CD4-positive, alpha-beta T cell (primary cell): ENCODE measurements at regions of chr5 and their contacts with region 1.

Region 1: DNA sequence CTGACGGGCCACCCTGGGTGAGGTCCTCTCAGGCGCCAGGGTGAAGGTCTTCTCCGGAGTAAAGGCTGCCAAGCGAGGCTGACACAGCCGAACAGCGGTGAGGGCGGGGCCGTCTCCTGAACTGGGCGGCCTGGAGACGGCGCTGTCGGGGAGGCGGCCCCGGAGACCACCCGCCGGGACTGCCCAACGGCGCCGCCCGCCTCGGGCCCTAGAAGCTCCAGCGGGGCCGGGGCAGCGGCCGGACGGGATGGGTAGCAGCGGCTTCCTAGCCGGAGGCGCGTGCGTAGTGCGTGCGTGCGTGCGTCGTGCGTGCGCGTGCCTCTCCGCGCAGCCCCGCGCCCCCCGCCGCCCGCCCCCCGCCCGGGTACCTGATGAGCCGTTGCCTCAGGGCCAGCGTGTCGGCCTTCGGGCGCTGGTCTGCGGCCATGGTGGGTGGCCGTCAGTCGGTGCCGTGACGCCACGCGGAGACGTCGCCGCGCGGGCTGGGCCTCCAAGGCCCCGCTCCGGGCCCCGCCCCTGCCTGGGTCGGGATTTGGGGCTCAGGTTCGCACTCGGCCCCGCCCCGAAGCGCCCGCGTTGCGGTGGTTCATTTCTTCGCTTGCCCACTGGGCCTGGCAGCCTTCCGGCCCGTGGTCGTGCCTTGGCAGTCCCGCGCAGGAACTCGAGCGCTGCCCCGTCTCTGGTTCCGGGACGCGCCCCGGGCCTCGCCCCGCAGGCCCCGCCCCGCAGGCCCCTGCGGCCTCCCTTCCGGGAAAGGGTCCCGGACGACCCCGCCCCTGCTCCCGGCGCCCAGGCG is at the start of gene PHYKPL:
- DNase-seq: peak; percentile 44 to 83 (median 64)
- ATAC-seq: peak; percentile 60
- H3K4me3 ChIP-seq: peak within 1 kb of the TSS; percentile 94
- H3K4me3 Mint-ChIP-seq: peak within 1 kb of the TSS; percentile 90
- H3K27ac ChIP-seq: peak within 1 kb of the TSS; percentile 81 to 85
- H3K27ac Mint-ChIP-seq: peak within 1 kb of the TSS; percentile 84
- H3K4me1 ChIP-seq: peaks cover 85% of the 10 kb centered on the region
- H3K4me1 Mint-ChIP-seq: peaks cover 54% of the 10 kb centered on the region
- H3K27me3 ChIP-seq: no peaks in the 10 kb centered on the region
- H3K27me3 Mint-ChIP-seq: no peaks in the 10 kb centered on the region
- CTCF ChIP-seq: no peak
- total RNA-seq, gene PHYKPL: 90.9 to 92.8 TPM

Region 2: GRCh38 chr5:178204182-178204894 is 28.0 kb before region 1 on chr5 and contains the start of gene HNRNPAB:
- CTCF ChIA-PET with region 1: interaction called, 7 read pairs
- POLR2A ChIA-PET with region 1: interaction called, 19 read pairs
- intact Hi-C with region 1: loop called in 1 of 2 experiments (anchors 1 kb)
- DNase-seq: peak; percentile 93 to 99 (median 97)
- ATAC-seq: peak; percentile 81
- H3K4me3 ChIP-seq: peak within 1 kb of the TSS; percentile 97
- H3K4me3 Mint-ChIP-seq: peak within 1 kb of the TSS; percentile 100
- H3K27ac ChIP-seq: peak within 1 kb of the TSS; percentile 29 to 62
- H3K27ac Mint-ChIP-seq: peak within 1 kb of the TSS; percentile 93
- H3K4me1 ChIP-seq: peaks cover 35% of the 10 kb centered on the region
- H3K4me1 Mint-ChIP-seq: peaks cover 40% of the 10 kb centered on the region
- H3K27me3 ChIP-seq: no peaks in the 10 kb centered on the region
- H3K27me3 Mint-ChIP-seq: peaks cover 4% of the 10 kb centered on the region
- CTCF ChIP-seq: no peak
- total RNA-seq, gene HNRNPAB: 63.6 to 68.9 TPM

Region 3: DNA sequence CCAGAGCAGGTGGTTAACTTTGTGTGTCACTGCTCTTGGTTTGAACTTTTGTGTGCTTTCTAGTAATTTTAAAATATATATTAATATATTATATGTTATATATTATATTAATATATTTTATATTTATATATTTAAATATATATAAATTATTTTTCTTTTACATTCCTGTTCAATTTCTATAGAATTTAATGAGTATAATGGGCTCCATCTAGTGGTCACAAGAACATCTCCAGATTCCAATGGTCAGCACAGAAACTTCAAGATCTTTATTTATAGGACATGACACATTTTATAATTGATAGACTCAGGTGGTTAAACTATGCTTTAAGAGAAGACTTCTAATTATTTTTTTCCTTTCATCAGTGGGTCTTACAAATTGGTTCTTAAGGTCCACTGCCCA is 318.7 kb after region 1 on chr5:
- CTCF ChIA-PET with region 1: no interaction called
- POLR2A ChIA-PET with region 1: no interaction called
- intact Hi-C with region 1: loop called in 1 of 2 experiments (anchors 1 kb)
- DNase-seq: peak in 1 of 14 experiments; percentile 29
- ATAC-seq: no peak
- H3K4me3 ChIP-seq: no peak overlapping the region
- H3K4me3 Mint-ChIP-seq: no peak overlapping the region
- H3K27ac ChIP-seq: no peak overlapping the region
- H3K27ac Mint-ChIP-seq: no peak overlapping the region
- H3K4me1 ChIP-seq: no peaks in the 10 kb centered on the region
- H3K4me1 Mint-ChIP-seq: no peaks in the 10 kb centered on the region
- H3K27me3 ChIP-seq: no peaks in the 10 kb centered on the region
- H3K27me3 Mint-ChIP-seq: peaks cover 24% of the 10 kb centered on the region
- CTCF ChIP-seq: peak; percentile 59

Region 4: GRCh38 chr5:178589180-178590140 is 357.1 kb after region 1 on chr5:
- CTCF ChIA-PET with region 1: no interaction called
- POLR2A ChIA-PET with region 1: no interaction called
- intact Hi-C with region 1: loop called in 1 of 2 experiments (anchors 10 kb)
- DNase-seq: peak in 2 of 14 experiments; percentile 36 to 45
- ATAC-seq: no peak
- H3K4me3 ChIP-seq: no peak overlapping the region
- H3K4me3 Mint-ChIP-seq: peak overlapping the region; percentile 60
- H3K27ac ChIP-seq: no peak overlapping the region
- H3K27ac Mint-ChIP-seq: no peak overlapping the region
- H3K4me1 ChIP-seq: peaks cover 21% of the 10 kb centered on the region
- H3K4me1 Mint-ChIP-seq: peaks cover 10% of the 10 kb centered on the region
- H3K27me3 ChIP-seq: peaks cover 34 to 43% of the 10 kb centered on the region in 2 experiments
- H3K27me3 Mint-ChIP-seq: peaks cover 62% of the 10 kb centered on the region
- CTCF ChIP-seq: no peak